ENCODE measurements at regions of chr22 and their contacts with region 1.

Region 1: GRCh38 chr22:19495562-19496323 is 16.0 kb downstream of the CDC45 start:
- DNase-seq: peak; percentile 22
- ATAC-seq: no peak
- H3K4me3 ChIP-seq: no peak overlapping the region
- H3K27ac ChIP-seq: no peak overlapping the region
- H3K4me1 ChIP-seq: peaks cover 5% of the 10 kb centered on the region; the same call in 1 of the 2 replicates
- H3K27me3 ChIP-seq: no peaks in the 10 kb centered on the region
- CTCF ChIP-seq: peak; percentile 45; the same call in 1 of the 2 replicates

Region 2: GRCh38 chr22:19568337-19569275 is 72.9 kb after region 1 on chr22:
- CTCF ChIA-PET with region 1: no interaction called
- POLR2A ChIA-PET with region 1: no interaction called
- intact Hi-C with region 1: loop called (anchors 2 kb)
- DNase-seq: peak; percentile 92
- ATAC-seq: peak; percentile 74
- H3K4me3 ChIP-seq: no peak overlapping the region
- H3K27ac ChIP-seq: peak overlapping the region; percentile 83
- H3K4me1 ChIP-seq: peaks cover 54% of the 10 kb centered on the region
- H3K27me3 ChIP-seq: no peaks in the 10 kb centered on the region
- CTCF ChIP-seq: no peak

Region 3: DNA sequence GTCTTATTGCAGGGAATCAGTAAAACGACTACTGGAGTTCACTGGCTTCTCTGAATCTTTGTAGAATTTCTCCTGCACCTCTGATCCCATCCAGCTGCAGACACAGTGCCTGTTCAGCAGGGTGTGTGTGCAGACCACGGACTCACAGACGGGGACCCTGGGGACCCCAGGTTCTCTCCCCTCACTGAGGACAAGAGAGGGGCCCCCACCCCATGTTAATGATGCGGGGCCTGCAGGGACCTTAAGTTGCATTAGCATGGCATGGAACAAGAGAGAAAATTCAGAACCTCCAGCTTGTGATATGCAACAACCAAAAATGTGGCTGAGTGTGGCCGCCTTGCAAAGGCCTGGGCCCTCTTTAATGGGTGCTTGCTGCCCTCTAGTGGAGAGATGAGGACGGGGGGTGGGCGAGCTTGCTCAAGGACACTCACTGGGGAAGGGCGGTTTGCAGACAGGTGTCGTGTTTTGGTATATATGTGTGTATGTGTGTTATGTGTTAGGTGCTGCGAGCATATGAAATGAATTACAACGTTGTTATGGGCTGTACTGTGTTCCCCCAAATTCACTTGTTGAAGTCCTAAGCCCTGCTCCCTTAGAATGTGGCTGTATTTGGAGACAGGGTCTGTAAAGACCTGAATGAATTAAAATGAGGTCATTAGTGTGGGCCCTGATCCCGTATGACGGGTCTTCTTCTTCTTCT is 134.1 kb after region 1 on chr22:
- CTCF ChIA-PET with region 1: interaction called, 23 read pairs
- POLR2A ChIA-PET with region 1: no interaction called
- intact Hi-C with region 1: loop called (anchors 1 kb)
- DNase-seq: peak; percentile 78
- ATAC-seq: peak; percentile 89
- H3K4me3 ChIP-seq: no peak overlapping the region
- H3K27ac ChIP-seq: no peak overlapping the region
- H3K4me1 ChIP-seq: no peaks in the 10 kb centered on the region
- H3K27me3 ChIP-seq: no peaks in the 10 kb centered on the region
- CTCF ChIP-seq: peak; percentile 90

Region 4: GRCh38 chr22:19717691-19718455 is 222.1 kb after region 1 on chr22:
- CTCF ChIA-PET with region 1: no interaction called
- POLR2A ChIA-PET with region 1: no interaction called
- intact Hi-C with region 1: loop called (anchors 10 kb)
- DNase-seq: peak; percentile 68
- ATAC-seq: peak; percentile 73
- H3K4me3 ChIP-seq: peak overlapping the region; percentile 62
- H3K27ac ChIP-seq: no peak overlapping the region
- H3K4me1 ChIP-seq: no peaks in the 10 kb centered on the region
- H3K27me3 ChIP-seq: no peaks in the 10 kb centered on the region
- CTCF ChIP-seq: peak; percentile 49